ENCODE measurements at regions of chr3 and their contacts with region 1.

Region 1: GRCh38 chr3:67605377-67605776 is 49.0 kb downstream of the SUCLG2 start:
- DNase-seq: peak; percentile 30
- H3K4me3 ChIP-seq: no peak overlapping the region
- H3K27me3 ChIP-seq: no peaks in the 10 kb centered on the region
- CTCF ChIP-seq: peak; percentile 65

Region 2: DNA sequence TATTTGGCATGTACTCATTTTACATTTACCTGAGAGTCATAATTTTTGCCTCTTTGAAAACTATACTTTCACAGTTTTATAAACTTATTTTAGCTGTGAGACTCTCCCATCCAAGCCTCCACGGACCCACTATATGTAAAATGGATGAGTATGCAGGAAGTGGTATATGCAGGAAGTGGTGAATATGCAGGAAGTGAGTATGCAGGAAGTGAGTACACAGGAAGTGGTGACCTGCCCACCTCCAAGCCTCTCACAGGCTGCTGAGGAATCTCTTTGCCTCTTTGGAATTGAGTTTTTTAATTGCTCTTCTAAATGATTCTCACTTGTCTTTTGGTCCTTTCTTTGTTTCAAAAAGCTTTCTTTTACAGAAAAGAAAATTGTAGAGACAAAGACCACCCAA is 522.1 kb before region 1 on chr3:
- CTCF ChIA-PET with region 1: no interaction called
- POLR2A ChIA-PET with region 1: no interaction called
- DNase-seq: no peak
- H3K4me3 ChIP-seq: no peak overlapping the region
- H3K27me3 ChIP-seq: no peaks in the 10 kb centered on the region
- CTCF ChIP-seq: no peak

Region 3: DNA sequence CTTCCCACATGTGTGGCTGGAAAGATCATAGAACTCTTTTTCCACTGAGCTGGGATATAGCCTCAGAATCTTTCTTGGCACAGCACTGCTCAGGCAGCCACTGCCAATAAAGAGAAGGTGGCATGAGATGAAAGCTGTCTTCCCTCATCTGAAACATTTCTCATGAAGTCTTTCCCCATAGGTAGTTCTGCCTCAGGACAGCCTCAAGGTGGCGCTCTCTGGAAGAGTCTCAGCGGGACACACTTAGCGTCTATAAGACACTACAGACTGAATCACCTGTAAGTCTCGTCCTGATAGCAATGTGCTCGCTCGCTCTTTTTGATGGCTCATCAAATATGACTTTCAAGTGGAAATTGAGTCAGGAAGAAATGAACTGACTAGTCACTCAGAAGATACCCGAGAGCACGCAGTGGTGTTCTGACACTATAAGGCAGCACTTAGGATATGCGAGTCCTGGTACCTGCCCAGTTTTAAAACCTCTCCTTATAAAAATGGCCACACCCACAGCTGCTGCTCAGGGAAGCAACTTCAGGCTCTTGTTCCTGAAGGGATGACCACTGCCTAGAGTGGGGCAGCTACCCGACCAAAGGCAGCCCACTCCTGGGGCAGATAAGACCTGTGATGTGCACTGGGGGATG is 220.5 kb before region 1 on chr3:
- CTCF ChIA-PET with region 1: interaction called, 75 read pairs
- POLR2A ChIA-PET with region 1: interaction called, 3 read pairs
- DNase-seq: no peak
- H3K4me3 ChIP-seq: no peak overlapping the region
- H3K27me3 ChIP-seq: no peaks in the 10 kb centered on the region
- CTCF ChIP-seq: peak; percentile 58

Region 4: DNA sequence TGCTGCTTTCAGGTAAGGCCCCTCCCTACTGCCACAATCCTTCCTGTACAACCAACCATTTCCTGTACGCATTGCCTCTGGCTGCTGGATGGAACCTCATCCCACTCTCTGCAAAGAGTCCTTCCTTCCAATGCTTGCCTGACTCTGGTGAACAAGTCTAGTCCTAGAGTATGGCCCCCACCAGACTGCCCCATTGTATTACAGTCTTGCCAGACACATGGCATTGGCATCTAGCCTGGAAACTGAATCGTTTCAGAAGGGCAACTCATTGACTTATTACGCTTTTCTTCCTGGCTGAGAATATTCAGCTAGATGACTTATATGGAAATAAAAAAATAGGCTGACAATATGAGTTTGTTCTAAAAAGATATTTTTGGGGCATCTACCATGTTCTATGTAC is 121.3 kb before region 1 on chr3:
- CTCF ChIA-PET with region 1: no interaction called
- POLR2A ChIA-PET with region 1: no interaction called
- DNase-seq: no peak
- H3K4me3 ChIP-seq: no peak overlapping the region
- H3K27me3 ChIP-seq: no peaks in the 10 kb centered on the region
- CTCF ChIP-seq: no peak

Region 5: GRCh38 chr3:67521053-67521646 is 84.2 kb before region 1 on chr3:
- CTCF ChIA-PET with region 1: no interaction called
- POLR2A ChIA-PET with region 1: no interaction called
- DNase-seq: no peak
- H3K4me3 ChIP-seq: no peak overlapping the region
- H3K27me3 ChIP-seq: no peaks in the 10 kb centered on the region
- CTCF ChIP-seq: no peak

Region 6: DNA sequence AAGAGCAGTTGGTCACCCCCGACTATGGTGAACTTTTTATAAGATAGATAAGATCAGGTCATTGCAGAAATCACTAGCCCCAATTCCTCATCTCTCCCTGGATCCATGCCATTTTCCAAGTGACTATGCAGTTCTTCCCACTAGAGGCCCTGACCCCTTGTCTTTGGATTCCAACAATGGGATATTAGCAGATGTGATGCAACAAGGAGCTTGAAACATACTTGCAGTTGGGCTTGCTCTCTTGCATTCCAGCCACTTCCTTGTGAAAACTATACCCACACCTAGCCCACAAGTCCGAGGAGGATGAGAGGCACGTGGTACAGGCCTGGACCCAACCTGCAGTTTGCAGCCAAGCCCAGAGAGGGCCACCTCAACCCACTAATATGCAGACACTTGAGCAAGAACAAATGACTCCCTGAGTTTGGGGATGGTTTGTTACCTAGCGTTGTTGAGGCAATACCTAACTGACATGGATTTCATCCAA is 11.6 kb before region 1 on chr3:
- CTCF ChIA-PET with region 1: interaction called, 11 read pairs
- POLR2A ChIA-PET with region 1: no interaction called
- DNase-seq: peak; percentile 15
- H3K4me3 ChIP-seq: no peak overlapping the region
- H3K27me3 ChIP-seq: no peaks in the 10 kb centered on the region
- CTCF ChIP-seq: no peak

Region 7: DNA sequence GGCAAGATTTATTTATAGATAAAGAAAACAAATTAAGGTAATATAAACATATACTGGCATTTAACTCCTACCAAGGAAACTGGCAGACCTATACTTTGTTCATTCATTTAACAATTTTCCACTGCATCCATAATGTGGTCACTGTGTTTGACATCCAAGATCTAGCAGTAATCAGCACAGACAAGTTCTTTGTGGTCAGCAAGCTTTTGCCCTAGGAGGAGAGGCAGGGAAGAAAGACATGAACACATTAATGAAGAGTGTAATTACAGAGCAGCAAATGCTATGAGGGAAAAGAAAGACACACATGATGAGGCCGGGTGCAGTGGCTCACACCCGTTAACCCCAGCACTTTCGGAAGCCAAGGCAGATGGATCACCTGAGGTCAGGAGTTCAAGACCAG is 14.6 kb after region 1 on chr3:
- CTCF ChIA-PET with region 1: interaction called, 10 read pairs
- POLR2A ChIA-PET with region 1: no interaction called
- DNase-seq: no peak
- H3K4me3 ChIP-seq: no peak overlapping the region
- H3K27me3 ChIP-seq: no peaks in the 10 kb centered on the region
- CTCF ChIP-seq: no peak

Measured in BJ (cell line).